Posterior cingulate gyrus (tissue), 11 donors: ENCODE measurements at regions of chr20 and their contacts with region 1.

Region 1: GRCh38 chr20:47785854-47786764 is 828 bp upstream of the SULF2 start:
- DNase-seq: peak; percentile 54 to 95 (median 69)

Region 2: GRCh38 chr20:47725248-47725973 is 60.7 kb before region 1 on chr20:
- intact Hi-C with region 1: loop called (anchors 5 kb)
- DNase-seq: peak; percentile 38 to 94 (median 64)

Region 3: DNA sequence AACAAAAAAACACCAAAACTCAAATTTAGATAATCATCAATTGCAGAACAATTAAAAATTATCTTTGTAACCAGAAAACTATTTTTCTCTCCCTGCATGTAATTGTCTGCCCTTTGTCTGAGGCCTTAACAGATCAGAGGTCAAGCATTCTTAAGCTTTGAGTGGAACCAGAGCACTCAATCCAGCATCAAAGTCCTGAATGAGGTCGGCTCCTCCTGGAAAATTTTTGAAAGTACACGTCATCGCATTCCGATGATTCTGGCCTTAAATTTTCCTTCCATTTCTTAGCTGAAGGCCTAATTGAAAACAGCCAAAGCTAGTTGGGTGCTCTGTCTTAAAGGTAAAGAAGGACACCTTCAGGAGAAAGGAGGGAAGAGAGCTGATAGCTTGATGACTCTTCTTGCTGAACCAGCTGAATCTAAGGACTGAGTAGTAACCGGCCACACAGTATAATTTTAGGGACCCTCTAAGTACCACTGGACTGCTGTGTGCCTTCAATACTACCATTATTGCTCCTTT is 509.4 kb after region 1 on chr20:
- intact Hi-C with region 1: loop called (anchors 10 kb)
- DNase-seq: no peak

Region 4: DNA sequence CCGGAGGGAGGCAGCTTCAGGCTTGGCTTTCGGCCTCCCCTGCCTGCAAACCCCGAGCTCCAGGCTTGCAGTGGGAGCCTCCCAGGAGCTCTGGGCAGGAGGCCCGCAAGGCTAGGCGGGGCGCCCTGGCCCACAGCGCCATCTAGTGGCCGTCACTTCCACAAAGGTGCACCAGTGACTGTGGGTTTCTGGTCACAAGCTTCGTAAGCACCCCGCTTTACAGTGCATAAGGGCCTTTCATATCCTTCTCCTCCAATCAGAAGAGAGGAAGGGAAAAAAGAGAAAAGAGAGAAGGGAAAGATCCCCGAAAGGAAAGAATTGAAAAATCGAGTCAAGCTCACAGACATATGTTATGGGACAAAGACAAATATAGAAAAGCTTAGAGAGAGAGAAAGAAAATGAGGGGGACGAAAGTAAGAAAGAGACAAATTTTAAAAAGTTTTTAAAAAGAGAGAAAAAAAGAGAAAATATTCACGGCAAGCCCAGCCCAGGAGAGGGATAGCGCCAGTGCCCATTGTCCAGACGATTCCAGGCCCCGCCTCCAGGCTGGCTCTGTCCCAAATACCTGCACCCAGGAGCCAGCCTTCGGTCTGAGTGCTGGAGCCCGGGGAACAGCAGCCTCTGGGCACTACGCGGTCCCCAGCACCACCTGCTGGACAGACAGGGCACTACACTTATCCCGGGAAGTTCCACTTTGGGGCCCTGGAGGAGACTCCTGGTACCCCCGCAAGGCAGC is 834.6 kb after region 1 on chr20:
- intact Hi-C with region 1: loop called (anchors 1 kb)
- DNase-seq: peak; percentile 81 to 98 (median 90)